GM12878 (cell line): ENCODE measurements at regions of chr2 and their contacts with region 1.

Region 1: GRCh38 chr2:227471924-227472264 is at the start of gene AGFG1:
- DNase-seq: no peak
- ATAC-seq: peak; percentile 81
- H3K4me3 ChIP-seq: peak within 1 kb of the TSS; percentile 83
- H3K27ac ChIP-seq: peak within 1 kb of the TSS; percentile 68
- H3K4me1 ChIP-seq: no peaks in the 10 kb centered on the region
- H3K27me3 ChIP-seq: no peaks in the 10 kb centered on the region
- CTCF ChIP-seq: peak; percentile 95 to 99 (median 98); a peak in 5 of 6 replicates
- EP300 ChIP-seq: no peak
- POLR2A ChIP-seq: peak; percentile 58
- RAD21 ChIP-seq: peak; percentile 71
- polyA plus RNA-seq, gene AGFG1: 28.6 to 53.2 TPM

Region 2: DNA sequence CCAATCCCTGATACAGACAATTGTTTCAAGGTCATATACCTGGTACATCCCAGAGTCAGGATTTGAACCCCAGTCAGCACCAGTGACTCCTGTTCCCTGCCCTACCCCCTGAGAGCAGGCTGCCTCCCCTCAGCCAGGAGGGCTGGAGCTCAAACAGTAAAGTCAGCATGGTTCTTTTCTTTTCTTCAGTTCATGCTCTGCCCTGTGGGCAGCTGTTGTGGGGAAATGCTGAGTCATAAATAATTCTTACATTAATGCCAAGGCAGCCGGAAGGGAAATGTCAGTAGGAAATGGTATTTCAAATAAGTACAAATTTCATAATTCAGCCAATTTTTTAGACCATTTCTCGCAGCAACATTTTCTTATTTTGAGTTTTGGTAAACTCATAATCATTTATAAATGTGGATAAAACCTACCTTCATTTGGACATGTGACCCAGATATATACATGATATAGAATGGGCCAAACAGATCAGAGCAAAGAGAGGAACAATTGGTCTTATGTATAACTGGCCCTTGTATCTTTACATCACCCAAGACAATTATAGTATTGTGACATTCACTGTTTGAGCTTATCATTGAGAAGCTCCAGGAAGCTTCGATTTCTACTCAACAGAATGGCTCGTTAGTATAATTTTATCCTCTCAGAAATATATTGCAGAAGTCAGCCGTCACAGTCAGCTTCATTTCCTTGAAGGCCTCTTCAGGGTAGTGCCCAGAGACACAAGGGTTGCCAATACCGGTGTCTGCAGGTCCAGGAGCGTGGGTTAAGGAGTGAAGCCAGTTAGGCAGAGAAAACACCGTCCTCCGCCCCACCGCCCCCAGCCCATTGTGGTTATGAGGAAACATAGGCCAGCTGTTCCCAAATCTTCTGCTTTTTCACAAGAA is 56.1 kb before region 1 on chr2:
- CTCF ChIA-PET with region 1: interaction called, 127 read pairs
- POLR2A ChIA-PET with region 1: interaction called, 6 read pairs
- RAD21 ChIA-PET with region 1: interaction called, 11 read pairs
- SMC1A ChIA-PET with region 1: interaction called, 191 read pairs
- in situ Hi-C with region 1: no loop called
- intact Hi-C with region 1: no loop called
- DNase-seq: no peak
- ATAC-seq: peak; percentile 45
- H3K4me3 ChIP-seq: no peak overlapping the region
- H3K27ac ChIP-seq: no peak overlapping the region; the same call in 1 of the 2 replicates
- H3K4me1 ChIP-seq: peaks cover 31% of the 10 kb centered on the region
- H3K27me3 ChIP-seq: no peaks in the 10 kb centered on the region
- CTCF ChIP-seq: no peak
- EP300 ChIP-seq: no peak
- POLR2A ChIP-seq: no peak
- RAD21 ChIP-seq: no peak

Region 3: GRCh38 chr2:227460070-227460485 is 11.8 kb before region 1 on chr2:
- CTCF ChIA-PET with region 1: interaction called, 48 read pairs
- POLR2A ChIA-PET with region 1: interaction called, 9 read pairs
- RAD21 ChIA-PET with region 1: interaction called, 10 read pairs
- SMC1A ChIA-PET with region 1: interaction called, 14 read pairs
- in situ Hi-C with region 1: no loop called
- intact Hi-C with region 1: loop called (anchors 1 kb)
- DNase-seq: no peak
- ATAC-seq: peak; percentile 67
- H3K4me3 ChIP-seq: no peak overlapping the region
- H3K27ac ChIP-seq: peak overlapping the region; percentile 54
- H3K4me1 ChIP-seq: peaks cover 55% of the 10 kb centered on the region
- H3K27me3 ChIP-seq: no peaks in the 10 kb centered on the region
- CTCF ChIP-seq: no peak
- EP300 ChIP-seq: peak; percentile 59 to 65; a peak in 2 of 4 replicates
- POLR2A ChIP-seq: no peak
- RAD21 ChIP-seq: no peak

Region 4: DNA sequence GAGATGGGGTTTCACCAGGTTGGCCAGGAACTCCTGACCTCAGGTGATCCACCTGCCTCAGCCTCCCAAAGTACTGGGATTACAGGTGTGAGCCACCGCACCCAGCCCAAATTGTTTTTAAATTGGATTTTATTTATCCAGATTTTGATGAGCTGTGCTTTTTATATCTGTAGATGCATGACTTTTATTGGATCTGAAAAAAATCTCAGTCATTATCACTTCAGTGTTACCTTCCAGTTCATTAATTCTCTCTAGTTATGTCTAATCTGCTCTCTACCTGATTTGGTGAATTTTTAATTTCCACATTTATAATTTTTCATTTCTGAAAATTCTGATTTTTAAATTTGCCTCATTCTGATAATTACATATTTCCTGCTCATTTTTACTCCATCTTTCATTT is 13.5 kb after region 1 on chr2:
- CTCF ChIA-PET with region 1: interaction called, 10 read pairs
- POLR2A ChIA-PET with region 1: interaction called, 3 read pairs
- RAD21 ChIA-PET with region 1: interaction called, 4 read pairs
- SMC1A ChIA-PET with region 1: interaction called, 13 read pairs
- in situ Hi-C with region 1: no loop called
- intact Hi-C with region 1: no loop called
- DNase-seq: no peak
- ATAC-seq: no peak
- H3K4me3 ChIP-seq: no peak overlapping the region
- H3K27ac ChIP-seq: no peak overlapping the region
- H3K4me1 ChIP-seq: peaks cover 25% of the 10 kb centered on the region; the same call in 1 of the 2 replicates
- H3K27me3 ChIP-seq: no peaks in the 10 kb centered on the region
- CTCF ChIP-seq: no peak
- EP300 ChIP-seq: no peak
- POLR2A ChIP-seq: no peak
- RAD21 ChIP-seq: no peak

Region 5: DNA sequence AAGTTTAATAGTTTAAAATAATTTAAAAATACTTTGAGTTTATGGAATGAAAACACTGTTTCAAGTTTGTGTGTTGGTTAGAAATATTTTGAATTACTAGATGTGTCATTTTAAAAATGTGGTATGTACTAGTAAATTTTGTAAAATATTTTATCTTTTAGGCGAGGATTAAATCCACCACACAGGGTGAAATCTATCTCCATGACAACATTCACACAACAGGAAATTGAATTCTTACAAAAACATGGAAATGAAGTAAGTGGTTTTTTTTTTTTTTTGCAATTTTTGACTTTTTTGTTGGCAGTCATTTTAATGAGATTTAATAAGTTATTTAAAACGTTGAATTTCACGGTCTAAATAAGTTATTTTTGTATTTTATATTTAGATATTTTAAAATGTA is 19.5 kb after region 1 on chr2:
- CTCF ChIA-PET with region 1: interaction called, 10 read pairs
- POLR2A ChIA-PET with region 1: no interaction called
- RAD21 ChIA-PET with region 1: interaction called, 4 read pairs
- SMC1A ChIA-PET with region 1: interaction called, 12 read pairs
- in situ Hi-C with region 1: no loop called
- intact Hi-C with region 1: no loop called
- DNase-seq: no peak
- ATAC-seq: no peak
- H3K4me3 ChIP-seq: no peak overlapping the region
- H3K27ac ChIP-seq: no peak overlapping the region
- H3K4me1 ChIP-seq: 0 out of 2 replicates have a peak, but pooled peaks cover 5% of the 10 kb centered on the region
- H3K27me3 ChIP-seq: no peaks in the 10 kb centered on the region
- CTCF ChIP-seq: no peak
- EP300 ChIP-seq: no peak
- POLR2A ChIP-seq: no peak
- RAD21 ChIP-seq: no peak